AG04450 (cell line): ENCODE measurements at regions of chr1 and their contacts with region 1.

Region 1: GRCh38 chr1:26275580-26276431 is 4.1 kb upstream of the SH3BGRL3 start:
- DNase-seq: peak; percentile 77
- H3K4me3 ChIP-seq: no peak overlapping the region
- H3K27ac ChIP-seq: peak overlapping the region; percentile 61
- H3K27me3 ChIP-seq: no peaks in the 10 kb centered on the region
- CTCF ChIP-seq: peak; percentile 78

Region 2: GRCh38 chr1:26265405-26265804 is 10.4 kb before region 1 on chr1:
- CTCF ChIA-PET with region 1: interaction called, 12 read pairs
- POLR2A ChIA-PET with region 1: no interaction called
- DNase-seq: no peak
- H3K4me3 ChIP-seq: no peak overlapping the region
- H3K27ac ChIP-seq: no peak overlapping the region
- H3K27me3 ChIP-seq: no peaks in the 10 kb centered on the region
- CTCF ChIP-seq: no peak

Region 3: GRCh38 chr1:26363549-26364448 is 88.0 kb after region 1 on chr1:
- CTCF ChIA-PET with region 1: interaction called, 12 read pairs
- POLR2A ChIA-PET with region 1: no interaction called
- DNase-seq: peak; percentile 15
- H3K4me3 ChIP-seq: no peak overlapping the region
- H3K27ac ChIP-seq: no peak overlapping the region
- H3K27me3 ChIP-seq: peaks cover 56% of the 10 kb centered on the region
- CTCF ChIP-seq: peak; percentile 97